ENCODE measurements at regions of chr2 and their contacts with region 1.

Region 1: GRCh38 chr2:69012310-69013141 is 453 bp upstream of the ANTXR1 start:
- DNase-seq: peak; percentile 59
- ATAC-seq: peak; percentile 30
- H3K4me3 Mint-ChIP-seq: peak overlapping the region; percentile 65
- H3K27ac Mint-ChIP-seq: peak overlapping the region; percentile 23
- H3K4me1 Mint-ChIP-seq: peaks cover 14% of the 10 kb centered on the region
- H3K27me3 Mint-ChIP-seq: peaks cover 40% of the 10 kb centered on the region

Region 2: GRCh38 chr2:68943581-68944568 is 68.7 kb before region 1 on chr2:
- CTCF ChIA-PET with region 1: no interaction called
- POLR2A ChIA-PET with region 1: no interaction called
- intact Hi-C with region 1: loop called (anchors 5 kb)
- DNase-seq: peak; percentile 64
- ATAC-seq: peak; percentile 71
- H3K4me3 Mint-ChIP-seq: no peak overlapping the region
- H3K27ac Mint-ChIP-seq: no peak overlapping the region
- H3K4me1 Mint-ChIP-seq: peaks cover 6% of the 10 kb centered on the region
- H3K27me3 Mint-ChIP-seq: peaks cover 23% of the 10 kb centered on the region

Measured in activated CD4-positive, alpha-beta T cell treated with anti-CD3 and anti-CD28 coated beads for 36 hours (primary cell).